Ovary (tissue), 10 donors: ENCODE measurements at regions of chrX and their contacts with region 1.

Region 1: GRCh38 chrX:153947009-153947769 is 2.7 kb upstream of the RENBP start:
- DNase-seq: peak; percentile 45 to 73 (median 57)
- H3K4me3 ChIP-seq: no peak overlapping the region
- H3K27ac ChIP-seq: no peak overlapping the region
- H3K4me1 ChIP-seq: peaks cover 4% of the 10 kb centered on the region
- H3K27me3 ChIP-seq: no peaks in the 10 kb centered on the region
- CTCF ChIP-seq: peak in 2 of 3 donors; percentile 39
- EP300 ChIP-seq: no peak
- POLR2A ChIP-seq: no peak

Region 2: GRCh38 chrX:152960115-152960514 is 987.1 kb before region 1 on chrX:
- intact Hi-C with region 1: loop called in 1 of 4 experiments (anchors 10 kb)
- DNase-seq: no peak
- H3K4me3 ChIP-seq: no peak overlapping the region
- H3K27ac ChIP-seq: no peak overlapping the region
- H3K4me1 ChIP-seq: no peaks in the 10 kb centered on the region
- H3K27me3 ChIP-seq: no peaks in the 10 kb centered on the region
- CTCF ChIP-seq: no peak
- EP300 ChIP-seq: no peak
- POLR2A ChIP-seq: no peak

Region 3: GRCh38 chrX:153599192-153600031 is 347.8 kb before region 1 on chrX:
- intact Hi-C with region 1: loop called in 1 of 4 experiments (anchors 10 kb)
- DNase-seq: peak; percentile 86 to 92 (median 88)
- H3K4me3 ChIP-seq: peak overlapping the region; percentile 56
- H3K27ac ChIP-seq: no peak overlapping the region
- H3K4me1 ChIP-seq: no peaks in the 10 kb centered on the region
- H3K27me3 ChIP-seq: no peaks in the 10 kb centered on the region
- CTCF ChIP-seq: peak in 1 of 3 donors; percentile 14
- EP300 ChIP-seq: no peak
- POLR2A ChIP-seq: no peak

Region 4: DNA sequence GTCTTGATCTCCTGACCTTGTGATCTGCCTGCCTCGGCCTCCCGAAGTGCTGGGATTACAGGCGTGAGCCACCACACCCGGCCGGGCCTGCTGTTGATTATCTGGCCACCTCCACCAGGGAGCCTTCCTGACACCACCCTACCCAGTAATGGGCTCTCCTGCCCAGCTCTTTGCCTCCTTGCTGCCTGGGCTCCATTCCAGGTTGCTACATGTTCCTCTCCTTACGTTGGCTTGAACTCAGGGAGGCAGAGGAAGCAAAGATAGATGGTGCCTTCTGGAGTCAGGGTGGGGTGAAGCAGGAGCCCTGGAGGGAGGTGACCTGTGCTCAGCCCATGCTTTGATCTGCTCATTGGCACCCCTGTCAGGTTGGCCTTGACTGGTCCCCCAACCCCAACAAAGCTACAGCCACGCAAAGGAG is 400.9 kb after region 1 on chrX:
- intact Hi-C with region 1: no loop called
- DNase-seq: peak in 3 of 5 donors; percentile 31 to 40 (median 36)
- H3K4me3 ChIP-seq: no peak overlapping the region
- H3K27ac ChIP-seq: no peak overlapping the region
- H3K4me1 ChIP-seq: no peaks in the 10 kb centered on the region
- H3K27me3 ChIP-seq: no peaks in the 10 kb centered on the region
- CTCF ChIP-seq: no peak
- EP300 ChIP-seq: no peak
- POLR2A ChIP-seq: no peak